ENCODE measurements at regions of chr20 and their contacts with region 1.

Region 1: GRCh38 chr20:10521068-10521831 is 86.1 kb downstream of the SLX4IP start:
- DNase-seq: no peak
- ATAC-seq: no peak
- H3K4me3 ChIP-seq: no peak overlapping the region
- H3K4me3 Mint-ChIP-seq: no peak overlapping the region
- H3K27ac ChIP-seq: no peak overlapping the region
- H3K27ac Mint-ChIP-seq: no peak overlapping the region
- H3K4me1 ChIP-seq: no peaks in the 10 kb centered on the region
- H3K4me1 Mint-ChIP-seq: peaks cover 22% of the 10 kb centered on the region
- H3K27me3 ChIP-seq: no peaks in the 10 kb centered on the region
- H3K27me3 Mint-ChIP-seq: no peaks in the 10 kb centered on the region
- CTCF ChIP-seq: no peak

Region 2: DNA sequence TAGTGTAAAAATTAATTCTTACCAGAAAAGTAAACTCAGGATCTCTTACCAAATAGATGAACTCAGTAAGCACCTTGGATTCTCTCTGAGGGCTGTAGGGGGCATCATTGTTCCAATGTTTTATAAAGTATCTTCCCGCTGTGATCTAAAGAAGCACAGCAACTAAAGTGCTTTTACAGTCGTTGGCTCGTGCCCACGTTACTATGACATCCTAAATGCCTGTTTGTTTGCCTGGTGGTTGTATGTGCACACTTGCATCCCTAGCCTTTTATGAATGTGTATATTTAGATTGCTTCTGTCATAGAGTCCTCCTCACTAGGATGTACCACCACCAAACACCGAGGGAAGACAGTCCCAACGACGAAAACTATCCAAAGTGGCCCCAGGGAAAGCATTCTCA is 51.7 kb before region 1 on chr20:
- CTCF ChIA-PET with region 1: no interaction called
- POLR2A ChIA-PET with region 1: no interaction called
- intact Hi-C with region 1: loop called in 1 of 2 experiments (anchors 5 kb)
- DNase-seq: peak in 4 of 14 experiments; percentile 12 to 58 (median 52)
- ATAC-seq: no peak
- H3K4me3 ChIP-seq: no peak overlapping the region
- H3K4me3 Mint-ChIP-seq: no peak overlapping the region
- H3K27ac ChIP-seq: no peak overlapping the region
- H3K27ac Mint-ChIP-seq: no peak overlapping the region
- H3K4me1 ChIP-seq: peaks cover under 1% of the 10 kb centered on the region
- H3K4me1 Mint-ChIP-seq: peaks cover 7% of the 10 kb centered on the region
- H3K27me3 ChIP-seq: no peaks in the 10 kb centered on the region
- H3K27me3 Mint-ChIP-seq: no peaks in the 10 kb centered on the region
- CTCF ChIP-seq: peak; percentile 28

Region 3: DNA sequence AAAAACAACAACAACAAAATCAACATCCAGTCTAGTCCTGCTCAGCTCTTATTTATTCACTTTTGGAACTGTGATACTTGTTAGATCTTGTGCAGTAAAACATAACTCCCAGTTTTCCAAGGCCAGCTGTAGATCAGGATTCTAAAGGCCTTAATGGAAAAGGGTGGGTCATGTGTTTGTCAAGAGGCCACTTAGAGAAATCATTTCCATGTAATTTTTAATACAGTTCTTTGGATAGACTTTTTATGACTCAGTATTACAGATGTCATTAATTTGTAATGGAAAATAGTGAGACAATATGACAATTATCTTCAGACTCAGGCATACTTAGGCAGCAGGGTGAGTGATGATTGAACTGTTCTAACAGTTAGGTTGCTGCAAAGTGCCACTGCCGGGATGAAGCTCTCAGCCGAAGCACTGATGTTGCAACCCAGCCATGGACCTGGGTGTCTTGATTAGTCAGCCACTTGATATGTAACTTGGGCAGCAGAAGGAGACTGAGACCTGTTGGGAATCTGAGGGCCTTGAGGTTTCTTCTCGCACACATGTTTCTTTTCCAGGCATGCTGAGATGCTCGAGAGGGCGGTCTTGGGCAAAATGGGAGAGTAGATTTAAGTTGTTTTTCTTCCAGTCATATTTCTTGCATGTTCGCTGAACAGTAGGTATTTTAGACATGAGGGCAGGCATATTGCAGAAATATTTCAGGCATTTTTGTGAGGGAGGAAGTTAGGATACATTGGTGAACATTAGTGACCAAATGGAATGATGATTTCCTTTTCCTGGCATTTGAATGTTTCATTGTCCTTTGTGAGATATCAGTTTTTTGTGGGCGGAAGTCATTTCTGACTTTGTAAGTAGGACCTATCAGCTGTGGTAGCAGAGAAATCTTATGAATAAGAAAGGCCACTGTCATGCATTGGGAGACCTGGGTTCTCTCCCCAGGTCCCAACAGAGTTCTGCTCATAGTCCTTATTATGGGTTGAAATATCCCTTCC is 33.8 kb before region 1 on chr20:
- CTCF ChIA-PET with region 1: no interaction called
- POLR2A ChIA-PET with region 1: no interaction called
- intact Hi-C with region 1: loop called in 1 of 2 experiments (anchors 5 kb)
- DNase-seq: peak in 2 of 14 experiments; percentile 36 to 59
- ATAC-seq: no peak
- H3K4me3 ChIP-seq: no peak overlapping the region
- H3K4me3 Mint-ChIP-seq: no peak overlapping the region
- H3K27ac ChIP-seq: no peak overlapping the region
- H3K27ac Mint-ChIP-seq: no peak overlapping the region
- H3K4me1 ChIP-seq: no peaks in the 10 kb centered on the region
- H3K4me1 Mint-ChIP-seq: no peaks in the 10 kb centered on the region
- H3K27me3 ChIP-seq: no peaks in the 10 kb centered on the region
- H3K27me3 Mint-ChIP-seq: no peaks in the 10 kb centered on the region
- CTCF ChIP-seq: no peak

Measured in CD4-positive, alpha-beta T cell (primary cell).